Cardiac septum (tissue), 1 donor: ENCODE measurements at regions of chr9 and their contacts with region 1.

Region 1: GRCh38 chr9:23621188-23621587 is 204.9 kb downstream of the ELAVL2 start:
- DNase-seq: no peak

Region 2: GRCh38 chr9:23577611-23578010 is 43.6 kb before region 1 on chr9:
- intact Hi-C with region 1: loop called (anchors 5 kb)
- DNase-seq: no peak

Region 3: DNA sequence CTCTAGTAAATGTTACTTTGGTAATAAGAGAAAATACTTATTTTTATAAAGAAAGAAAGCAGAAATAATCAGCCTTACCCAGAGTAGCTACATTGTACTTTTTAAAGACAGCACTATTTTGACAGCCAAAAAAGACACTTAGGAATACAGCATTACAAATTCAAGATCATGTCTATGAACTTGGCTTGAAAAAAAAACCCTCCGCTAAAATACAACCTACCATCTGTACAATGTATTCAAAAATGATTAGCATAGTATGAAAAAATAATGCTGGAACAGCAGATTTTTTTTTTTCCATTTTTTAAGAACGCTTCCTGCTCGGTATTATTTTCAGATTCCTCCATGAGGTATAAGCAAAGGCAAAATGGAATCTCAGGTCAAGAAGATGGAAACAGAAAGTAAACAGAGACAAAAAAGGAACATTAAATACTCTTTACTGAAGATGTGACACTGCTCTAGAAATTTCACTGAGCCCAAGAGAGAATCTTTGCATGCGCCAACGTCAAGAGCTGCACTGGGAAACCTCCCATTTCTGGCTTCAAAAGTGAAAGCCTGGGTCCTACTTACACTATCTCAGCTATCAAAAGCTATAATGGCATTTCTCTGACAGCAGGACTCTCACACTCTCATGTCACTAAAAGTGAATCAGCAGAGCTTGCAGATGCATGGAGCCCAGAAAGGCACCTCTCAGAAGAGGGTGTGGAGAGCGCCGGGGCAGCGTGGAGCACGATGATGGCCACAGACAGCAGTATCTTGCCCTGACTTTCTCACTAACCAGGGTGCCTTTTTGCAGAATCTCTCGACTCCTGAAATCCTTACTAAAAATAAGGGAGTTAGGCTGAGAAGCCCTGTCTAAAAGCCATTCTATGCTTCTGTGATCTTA is 37.4 kb after region 1 on chr9:
- intact Hi-C with region 1: no loop called
- DNase-seq: no peak